Kidney (tissue), 22 donors: ENCODE measurements at regions of chr20 and their contacts with region 1.

Region 1: GRCh38 chr20:50189681-50190582 is 698 bp upstream of the CEBPB start:
- DNase-seq: peak; percentile 91 to 97 (median 95)
- H3K4me3 ChIP-seq: peak overlapping the region in 1 of 3 donors; percentile 59
- H3K27ac ChIP-seq: peak overlapping the region in 1 of 2 donors; percentile 95
- H3K4me1 ChIP-seq: peaks cover 0 to 11% (median 11%) of the 10 kb centered on the region in 3 donors
- H3K27me3 ChIP-seq: no peaks in the 10 kb centered on the region
- CTCF ChIP-seq: peak; percentile 71

Region 2: DNA sequence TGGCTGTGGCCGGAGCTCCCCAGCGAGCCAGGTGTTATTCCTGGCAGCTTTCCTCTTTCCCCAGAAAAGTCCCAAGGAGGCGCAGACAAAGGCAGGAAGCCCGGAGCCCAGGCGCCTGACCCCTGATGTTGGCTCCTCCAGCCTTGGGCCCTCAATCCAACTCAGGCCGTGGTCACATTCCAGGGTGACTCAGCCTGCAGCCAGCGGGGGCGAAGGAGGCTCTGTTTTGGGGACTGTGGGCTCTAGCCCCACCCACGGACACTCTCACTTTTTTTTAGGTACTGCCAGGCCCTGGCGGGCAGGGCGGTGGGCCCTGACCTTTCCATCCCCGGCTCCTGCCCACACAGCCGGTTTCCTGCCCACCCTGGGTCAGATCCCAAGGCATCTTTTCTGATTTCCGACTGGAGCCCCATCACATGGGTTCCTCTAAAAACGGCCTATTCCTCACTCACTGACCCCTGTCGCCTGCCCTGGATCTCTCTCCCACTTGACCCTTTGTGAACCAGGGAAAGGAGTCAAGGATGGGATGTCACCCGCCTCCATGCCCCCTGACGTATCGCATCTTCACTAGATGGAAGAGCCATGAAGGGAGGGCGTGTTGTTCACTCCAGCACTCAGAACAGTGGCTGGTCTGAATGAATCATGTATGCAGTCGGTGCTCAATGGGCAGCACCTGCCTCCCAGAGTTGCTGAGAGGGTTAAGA is 627.5 kb before region 1 on chr20:
- intact Hi-C with region 1: no loop called
- DNase-seq: peak; percentile 39 to 91 (median 46)
- H3K4me3 ChIP-seq: no peak overlapping the region
- H3K27ac ChIP-seq: peak overlapping the region; percentile 29 to 48
- H3K4me1 ChIP-seq: peaks cover 0 to under 1% (median 0%) of the 10 kb centered on the region in 3 donors
- H3K27me3 ChIP-seq: no peaks in the 10 kb centered on the region
- CTCF ChIP-seq: no peak

Region 3: GRCh38 chr20:49794336-49795138 is 395.4 kb before region 1 on chr20:
- intact Hi-C with region 1: no loop called
- DNase-seq: no peak
- H3K4me3 ChIP-seq: no peak overlapping the region
- H3K27ac ChIP-seq: no peak overlapping the region
- H3K4me1 ChIP-seq: peaks cover 0 to 4% (median 3%) of the 10 kb centered on the region in 3 donors
- H3K27me3 ChIP-seq: no peaks in the 10 kb centered on the region
- CTCF ChIP-seq: no peak

Region 4: DNA sequence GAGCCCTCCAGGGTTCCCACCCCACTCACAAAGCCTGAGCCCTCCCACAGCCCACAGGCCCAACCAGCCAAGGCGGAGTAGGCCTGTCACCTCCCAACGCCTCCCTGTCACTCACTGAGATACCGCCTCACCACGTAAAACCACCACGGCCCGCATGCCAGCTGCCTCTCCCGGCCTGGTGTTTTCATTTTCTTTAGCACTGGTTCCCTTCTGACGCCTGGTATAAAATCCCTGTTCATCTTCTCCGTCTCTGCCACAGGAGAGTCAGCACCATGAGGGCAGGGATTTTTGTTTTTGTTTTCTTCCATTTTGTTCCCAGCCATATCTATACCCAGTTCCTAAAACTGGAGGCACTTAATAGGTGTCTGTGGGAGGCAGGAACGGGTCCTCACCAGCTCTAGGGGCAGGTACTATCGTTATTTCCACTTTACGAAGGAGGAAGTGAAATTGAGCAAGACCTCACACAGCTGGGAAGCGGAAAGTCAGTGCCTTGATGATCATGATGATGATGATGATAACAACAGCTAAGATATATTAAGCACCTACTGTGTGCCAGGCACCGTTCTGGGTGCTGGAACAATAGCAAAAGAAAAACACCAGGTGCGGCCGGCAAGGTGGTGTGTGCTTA is 148.6 kb before region 1 on chr20:
- intact Hi-C with region 1: no loop called
- DNase-seq: no peak
- H3K4me3 ChIP-seq: no peak overlapping the region
- H3K27ac ChIP-seq: no peak overlapping the region
- H3K4me1 ChIP-seq: peaks cover 0 to 4% (median 0%) of the 10 kb centered on the region in 3 donors
- H3K27me3 ChIP-seq: no peaks in the 10 kb centered on the region
- CTCF ChIP-seq: no peak

Region 5: GRCh38 chr20:50467718-50468356 is 277.9 kb after region 1 on chr20:
- intact Hi-C with region 1: loop called (anchors 5 kb)
- DNase-seq: peak in 1 of 5 donors; percentile 52
- H3K4me3 ChIP-seq: no peak overlapping the region
- H3K27ac ChIP-seq: no peak overlapping the region
- H3K4me1 ChIP-seq: peaks cover 0 to 2% (median 0%) of the 10 kb centered on the region in 3 donors
- H3K27me3 ChIP-seq: no peaks in the 10 kb centered on the region
- CTCF ChIP-seq: no peak

Region 6: DNA sequence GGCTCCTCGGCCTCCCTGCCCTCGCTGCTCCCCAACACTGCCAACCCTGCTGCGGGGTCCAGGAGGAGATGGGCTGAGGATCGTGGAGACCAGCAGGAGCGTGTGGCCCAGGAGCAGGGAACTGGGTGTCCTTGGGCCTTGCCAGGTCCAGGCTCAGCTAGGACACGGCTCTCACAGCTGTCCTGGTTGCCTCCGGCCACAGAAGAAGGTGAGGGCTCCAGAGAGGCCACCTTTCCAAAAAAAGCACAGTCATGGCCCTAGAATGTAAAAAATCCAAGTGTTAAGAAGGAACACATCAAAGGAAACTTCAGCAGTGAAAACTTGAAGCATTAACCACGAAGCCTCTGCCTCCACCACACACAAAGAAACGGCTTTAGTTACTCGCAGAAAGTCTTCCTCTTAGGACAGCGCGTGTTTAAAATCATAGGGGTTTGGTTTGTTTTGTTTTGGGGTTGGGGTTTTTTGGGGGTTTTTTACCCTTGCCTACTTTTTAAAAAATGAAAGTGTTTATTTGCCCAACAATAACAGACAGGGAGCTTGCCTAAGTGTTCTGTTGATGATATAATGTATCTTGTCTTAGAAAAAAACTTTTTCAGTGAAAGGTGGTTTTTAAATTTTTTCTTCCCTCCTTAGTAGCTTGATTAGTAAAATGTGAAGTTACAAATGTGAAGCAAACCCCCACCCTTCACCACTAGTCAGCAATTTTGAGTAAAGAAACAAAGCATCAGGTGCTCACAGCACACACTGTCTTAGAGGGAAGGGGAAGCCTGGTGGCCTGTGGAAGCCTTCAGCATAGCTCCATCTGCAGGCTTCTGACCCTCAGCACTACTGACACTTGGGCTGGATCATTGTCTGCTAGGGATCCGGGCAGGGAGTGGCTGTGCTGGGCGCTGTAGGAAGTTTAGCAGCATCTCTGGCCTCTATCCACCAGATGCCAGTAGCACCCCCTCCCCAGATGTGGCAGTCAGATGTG is 380.2 kb after region 1 on chr20:
- intact Hi-C with region 1: loop called (anchors 5 kb)
- DNase-seq: no peak
- H3K4me3 ChIP-seq: no peak overlapping the region
- H3K27ac ChIP-seq: no peak overlapping the region
- H3K4me1 ChIP-seq: peaks cover 0 to 18% (median 8%) of the 10 kb centered on the region in 3 donors
- H3K27me3 ChIP-seq: no peaks in the 10 kb centered on the region
- CTCF ChIP-seq: peak; percentile 20